H1 (cell line): ENCODE measurements at regions of chr9 and their contacts with region 1.

Region 1: DNA sequence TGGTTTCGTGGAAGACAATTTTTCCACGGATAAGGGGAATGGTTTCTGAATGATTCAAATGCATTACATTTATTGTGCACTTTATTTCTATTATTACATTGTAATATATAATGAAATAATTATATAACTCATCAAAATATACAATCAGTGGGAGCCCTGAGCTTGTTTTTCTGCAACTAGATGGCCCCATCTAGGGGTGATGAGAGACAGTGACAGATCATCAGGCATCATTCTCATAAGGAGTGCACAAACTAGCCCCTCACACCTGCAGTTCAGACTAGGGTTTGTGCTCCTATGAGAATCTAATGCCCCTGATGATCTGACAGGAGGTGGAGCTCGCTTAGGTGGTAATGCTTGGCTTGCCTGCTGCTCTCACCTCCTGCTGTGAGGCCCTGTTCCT is 6.4 kb downstream of the ISCA1 start:
- DNase-seq: no peak
- H3K4me3 ChIP-seq: no peak overlapping the region
- H3K27ac ChIP-seq: no peak overlapping the region
- H3K4me1 ChIP-seq: peaks cover 0 to 6% (median 2%) of the 10 kb centered on the region in 4 experiments; a peak in 3 of 7 replicates
- H3K27me3 ChIP-seq: no peaks in the 10 kb centered on the region
- CTCF ChIP-seq: peak in 2 of 3 experiments; percentile 33 to 37; a peak in 3 of 4 replicates
- EP300 ChIP-seq: no peak
- POLR2A ChIP-seq: no peak
- RAD21 ChIP-seq: peak; percentile 51 to 57

Region 2: GRCh38 chr9:86262452-86262851 is 13.5 kb before region 1 on chr9:
- CTCF ChIA-PET with region 1: interaction called, 17 read pairs
- POLR2A ChIA-PET with region 1: interaction called, 17 read pairs
- DNase-seq: no peak
- H3K4me3 ChIP-seq: no peak overlapping the region
- H3K27ac ChIP-seq: no peak overlapping the region
- H3K4me1 ChIP-seq: peaks cover 0 to 4% (median 0%) of the 10 kb centered on the region in 4 experiments; a peak in 1 of 7 replicates
- H3K27me3 ChIP-seq: no peaks in the 10 kb centered on the region
- CTCF ChIP-seq: no peak
- EP300 ChIP-seq: no peak
- POLR2A ChIP-seq: no peak
- RAD21 ChIP-seq: no peak

Region 3: DNA sequence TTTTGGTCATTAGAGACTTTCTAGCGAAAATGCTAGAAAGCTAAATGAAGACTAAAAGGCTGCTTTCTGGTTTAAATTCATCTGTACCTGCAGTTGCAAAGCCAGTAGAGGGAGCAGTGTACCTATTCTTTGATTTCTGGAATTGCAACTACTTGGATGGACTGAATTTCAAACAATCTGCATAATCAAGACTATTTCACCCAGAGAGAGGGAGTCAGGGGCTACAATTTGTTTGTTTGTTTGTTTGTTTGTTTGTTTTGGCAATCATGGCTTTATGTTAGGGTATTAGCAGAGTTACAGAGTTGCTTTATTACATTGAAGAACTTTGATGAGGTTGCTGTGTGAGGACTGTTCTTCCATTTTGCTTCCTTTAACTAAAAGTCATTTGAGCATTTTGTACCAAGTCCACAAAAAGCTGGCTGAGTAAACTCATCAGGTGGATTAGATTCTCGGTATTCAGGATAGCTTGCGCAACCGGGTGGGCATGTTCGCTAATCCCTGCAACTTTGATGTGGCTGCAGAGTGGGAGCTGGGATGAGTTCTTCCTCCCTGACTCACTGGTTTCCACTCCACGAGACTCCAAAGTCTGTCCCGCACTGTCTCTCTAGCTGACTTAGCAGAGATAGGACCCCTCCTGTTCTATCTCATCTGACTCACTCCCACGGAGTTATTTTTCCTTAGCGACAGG is 158.2 kb after region 1 on chr9:
- CTCF ChIA-PET with region 1: no interaction called
- POLR2A ChIA-PET with region 1: no interaction called
- DNase-seq: no peak
- H3K4me3 ChIP-seq: no peak overlapping the region
- H3K27ac ChIP-seq: no peak overlapping the region
- H3K4me1 ChIP-seq: peaks cover 0 to 8% (median 2%) of the 10 kb centered on the region in 4 experiments; a peak in 3 of 7 replicates
- H3K27me3 ChIP-seq: no peaks in the 10 kb centered on the region
- CTCF ChIP-seq: peak in 2 of 3 experiments; percentile 56 to 78; a peak in 2 of 4 replicates
- EP300 ChIP-seq: no peak
- POLR2A ChIP-seq: no peak
- RAD21 ChIP-seq: peak; percentile 87 to 90